ENCODE measurements at regions of chr3 and their contacts with region 1.

Region 1: GRCh38 chr3:11335056-11335608 is 62.9 kb downstream of the ATG7 start:
- DNase-seq: peak; percentile 45
- H3K4me3 ChIP-seq: no peak overlapping the region
- H3K27ac ChIP-seq: no peak overlapping the region
- H3K27me3 ChIP-seq: no peaks in the 10 kb centered on the region
- CTCF ChIP-seq: peak; percentile 71

Region 2: DNA sequence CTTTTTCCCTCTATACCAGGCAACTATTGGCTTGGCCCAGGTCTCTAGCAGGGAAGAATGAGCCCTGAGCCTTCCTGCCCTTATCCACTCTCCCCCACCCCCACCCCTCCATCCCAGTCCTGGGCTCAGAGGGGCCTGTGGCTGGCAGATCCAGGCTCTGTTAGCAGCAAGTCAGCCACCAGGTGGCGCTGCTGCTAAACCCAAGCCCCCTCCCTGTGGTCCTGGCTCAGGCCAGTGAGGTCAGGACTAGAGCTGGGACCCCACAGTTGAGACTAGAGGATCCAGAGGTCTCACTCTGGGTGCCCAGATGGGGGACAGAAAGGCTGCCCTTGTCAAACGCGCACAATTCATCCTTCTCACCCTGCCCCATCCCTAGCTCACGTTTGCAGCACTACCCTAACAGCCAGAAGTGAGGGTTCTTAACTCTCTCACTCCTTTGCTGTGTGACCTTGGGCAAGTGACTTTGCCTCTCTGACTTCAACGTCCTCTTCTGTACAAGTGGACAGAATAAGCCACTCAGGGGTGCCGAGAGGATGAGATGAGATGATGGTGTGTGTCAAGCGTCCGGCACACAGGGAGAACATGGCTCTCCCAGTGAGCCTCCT is 389.3 kb before region 1 on chr3:
- CTCF ChIA-PET with region 1: interaction called, 13 read pairs
- POLR2A ChIA-PET with region 1: no interaction called
- DNase-seq: peak; percentile 6
- H3K4me3 ChIP-seq: no peak overlapping the region
- H3K27ac ChIP-seq: no peak overlapping the region
- H3K27me3 ChIP-seq: peaks cover 5% of the 10 kb centered on the region
- CTCF ChIP-seq: peak; percentile 78

Region 3: DNA sequence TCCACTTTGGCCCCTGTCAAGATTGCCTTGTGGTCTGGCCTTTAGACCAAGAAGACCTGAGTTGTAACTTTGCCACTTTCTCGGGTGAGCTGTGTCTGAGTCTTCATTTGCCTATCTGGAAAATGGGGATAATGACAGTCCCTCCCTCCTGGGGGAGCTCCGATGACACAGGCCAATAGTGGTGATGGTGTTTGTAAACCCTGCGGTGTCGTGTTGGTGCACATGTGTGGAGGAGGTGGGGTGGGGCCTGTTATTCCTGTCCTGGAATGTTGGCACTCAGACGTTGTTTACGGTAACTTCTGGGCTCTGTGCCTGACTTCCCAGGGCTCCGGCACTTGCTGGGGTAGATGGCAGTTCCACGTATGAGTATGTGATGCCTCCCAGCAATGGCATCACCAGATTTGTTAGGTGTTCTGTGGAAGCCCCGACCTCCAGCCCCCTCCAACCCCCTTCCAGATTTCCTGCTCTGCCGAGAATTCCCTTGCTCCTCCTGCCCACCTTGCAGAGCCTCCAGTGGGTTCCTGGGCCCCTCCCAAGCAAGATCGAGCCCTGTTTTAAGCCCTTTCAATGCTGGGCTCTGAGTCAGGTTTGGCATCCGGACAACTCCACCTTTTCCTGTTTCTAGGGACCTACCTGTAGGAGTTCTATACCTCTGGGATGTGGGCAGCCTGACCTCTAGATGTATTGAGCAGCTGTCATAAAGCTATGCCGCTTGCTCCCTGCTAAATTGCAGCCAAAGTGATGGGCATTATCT is 149.4 kb before region 1 on chr3:
- CTCF ChIA-PET with region 1: no interaction called
- POLR2A ChIA-PET with region 1: no interaction called
- DNase-seq: peak; percentile 88
- H3K4me3 ChIP-seq: no peak overlapping the region
- H3K27ac ChIP-seq: peak overlapping the region; percentile 65
- H3K27me3 ChIP-seq: no peaks in the 10 kb centered on the region
- CTCF ChIP-seq: no peak

Region 4: DNA sequence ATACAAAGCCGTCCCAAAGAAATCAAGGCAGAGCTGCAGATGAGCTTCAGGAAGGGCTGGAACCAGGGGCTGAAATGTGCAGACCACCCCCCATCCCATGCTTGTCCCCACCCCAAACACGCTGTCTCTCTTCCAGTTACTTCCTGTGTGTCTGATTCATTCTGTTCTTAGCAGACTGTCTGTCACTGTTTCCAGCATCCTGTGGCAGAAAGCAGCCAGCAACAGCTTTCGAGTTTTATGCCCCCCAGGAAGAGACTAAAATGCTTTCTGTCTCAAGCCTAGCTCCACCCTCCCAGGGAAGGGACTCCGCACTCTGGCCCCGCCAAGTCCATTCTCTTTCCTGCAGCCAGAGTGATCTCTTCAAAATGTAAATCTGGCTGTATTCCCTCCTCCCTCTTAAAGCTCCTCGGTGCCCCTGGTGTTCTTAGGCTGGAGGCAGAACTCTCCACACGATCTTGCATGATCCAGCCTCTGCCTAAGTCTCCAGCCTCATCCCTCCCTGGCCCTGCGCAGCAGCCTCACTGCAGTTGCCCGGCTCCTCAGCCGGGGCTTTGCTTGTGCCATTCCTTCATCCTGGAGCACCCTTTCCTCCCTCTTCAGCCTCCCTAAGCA is 139.3 kb before region 1 on chr3:
- CTCF ChIA-PET with region 1: interaction called, 15 read pairs
- POLR2A ChIA-PET with region 1: no interaction called
- DNase-seq: no peak
- H3K4me3 ChIP-seq: 0 out of 2 replicates have a peak overlapping the region, but pooled peaks have one; percentile 0
- H3K27ac ChIP-seq: peak overlapping the region; percentile 77
- H3K27me3 ChIP-seq: no peaks in the 10 kb centered on the region
- CTCF ChIP-seq: peak; percentile 13; the same call in 1 of the 2 replicates

Region 5: DNA sequence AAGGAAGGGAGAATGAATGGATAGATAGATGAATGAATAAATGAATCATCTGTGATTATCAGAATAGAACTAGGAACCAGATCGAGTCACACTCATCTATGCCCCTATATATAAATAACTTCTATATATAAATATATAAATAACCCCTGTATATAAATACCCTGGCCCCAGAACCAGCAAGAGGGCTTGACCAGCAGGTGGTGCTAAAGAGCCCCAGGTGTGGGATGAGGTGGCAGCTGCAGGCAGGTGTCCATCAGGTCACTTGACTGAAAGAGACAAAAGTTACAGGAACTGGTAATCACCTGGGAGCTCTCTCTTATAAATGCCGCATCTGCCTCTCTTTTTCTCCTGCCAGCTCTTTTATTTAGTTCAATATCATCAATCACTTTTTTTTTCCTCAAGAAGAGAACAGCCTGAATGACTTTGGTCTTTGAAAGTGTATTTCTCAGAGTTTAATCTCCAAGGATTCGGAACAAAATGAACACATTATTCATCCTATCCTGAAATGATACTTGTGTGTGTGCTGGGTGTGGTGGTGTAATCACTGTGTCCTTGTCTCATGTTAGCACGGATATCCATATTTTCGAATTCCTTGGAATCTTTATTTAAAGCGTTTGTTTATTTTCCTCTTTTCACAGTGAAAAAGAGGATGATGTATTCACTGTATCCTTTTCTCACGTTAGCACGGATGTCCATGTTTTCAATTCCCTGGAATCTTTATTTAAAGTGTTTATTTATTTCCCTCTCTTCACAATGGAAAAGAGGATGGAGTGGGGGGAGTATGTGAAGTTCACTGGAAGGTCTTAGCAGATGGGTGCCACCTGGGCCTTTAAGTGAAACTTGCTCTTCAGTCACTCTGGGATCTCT is 98.3 kb before region 1 on chr3:
- CTCF ChIA-PET with region 1: interaction called, 13 read pairs
- POLR2A ChIA-PET with region 1: no interaction called
- DNase-seq: peak; percentile 38
- H3K4me3 ChIP-seq: no peak overlapping the region
- H3K27ac ChIP-seq: peak overlapping the region; percentile 92
- H3K27me3 ChIP-seq: no peaks in the 10 kb centered on the region
- CTCF ChIP-seq: peak; percentile 71

Region 6: GRCh38 chr3:11282250-11283138 is 52.6 kb before region 1 on chr3:
- CTCF ChIA-PET with region 1: interaction called, 3 read pairs
- POLR2A ChIA-PET with region 1: interaction called, 12 read pairs
- DNase-seq: no peak
- H3K4me3 ChIP-seq: no peak overlapping the region
- H3K27ac ChIP-seq: peak overlapping the region; percentile 74
- H3K27me3 ChIP-seq: no peaks in the 10 kb centered on the region
- CTCF ChIP-seq: no peak

Region 7: GRCh38 chr3:11323813-11324212 is 11.3 kb before region 1 on chr3:
- CTCF ChIA-PET with region 1: interaction called, 21 read pairs
- POLR2A ChIA-PET with region 1: no interaction called
- DNase-seq: no peak
- H3K4me3 ChIP-seq: no peak overlapping the region
- H3K27ac ChIP-seq: no peak overlapping the region
- H3K27me3 ChIP-seq: no peaks in the 10 kb centered on the region
- CTCF ChIP-seq: no peak

Region 8: DNA sequence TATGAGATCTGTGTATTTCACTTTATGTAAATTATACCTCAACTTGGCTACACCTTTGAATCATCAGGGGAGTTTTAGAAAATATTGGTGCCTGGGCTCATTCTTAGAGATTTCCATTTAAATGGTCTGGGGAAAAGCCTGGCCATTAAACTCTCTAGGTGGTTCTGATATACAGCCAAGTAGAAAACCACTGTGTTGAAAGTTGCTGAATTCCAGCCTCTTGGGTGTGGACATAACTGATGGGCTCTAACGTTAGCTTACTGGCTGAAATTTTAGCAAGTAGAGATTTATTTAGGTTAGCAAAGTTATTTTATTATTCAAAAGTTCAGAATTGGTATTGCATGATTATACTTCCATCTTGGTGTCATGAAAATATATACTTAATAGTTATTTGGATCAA is 21.1 kb after region 1 on chr3:
- CTCF ChIA-PET with region 1: interaction called, 29 read pairs
- POLR2A ChIA-PET with region 1: interaction called, 11 read pairs
- DNase-seq: no peak
- H3K4me3 ChIP-seq: no peak overlapping the region
- H3K27ac ChIP-seq: no peak overlapping the region
- H3K27me3 ChIP-seq: no peaks in the 10 kb centered on the region
- CTCF ChIP-seq: no peak

Region 9: DNA sequence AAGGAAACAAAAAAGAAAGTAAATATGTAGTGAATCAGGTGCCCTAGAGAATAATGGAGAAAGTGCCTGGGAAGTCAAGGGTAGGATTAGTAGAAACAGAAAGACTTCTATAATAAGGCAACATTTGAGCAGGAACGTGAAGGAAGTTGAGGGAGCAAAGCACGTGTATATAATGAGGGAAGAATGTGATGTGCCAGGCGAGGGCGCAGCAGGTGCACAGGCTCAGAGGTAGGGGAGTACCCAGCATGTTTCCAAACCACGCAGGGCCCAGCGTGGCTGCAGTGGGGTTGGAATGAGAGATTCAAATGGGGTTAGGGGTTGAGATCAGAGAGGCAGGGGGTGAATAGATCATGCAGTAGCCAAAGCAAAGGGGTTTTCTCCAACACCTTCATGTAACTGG is 400.5 kb after region 1 on chr3:
- CTCF ChIA-PET with region 1: no interaction called
- POLR2A ChIA-PET with region 1: no interaction called
- DNase-seq: no peak
- H3K4me3 ChIP-seq: no peak overlapping the region
- H3K27ac ChIP-seq: no peak overlapping the region
- H3K27me3 ChIP-seq: peaks cover 38% of the 10 kb centered on the region
- CTCF ChIP-seq: no peak